ENCODE measurements at regions of chr7 and their contacts with region 1.

Region 1: GRCh38 chr7:130047821-130048220 is 3.4 kb downstream of the ZC3HC1 start:
- DNase-seq: no peak
- H3K4me3 ChIP-seq: no peak overlapping the region
- H3K27ac ChIP-seq: no peak overlapping the region
- H3K4me1 ChIP-seq: peaks cover 8% of the 10 kb centered on the region
- H3K27me3 ChIP-seq: no peaks in the 10 kb centered on the region
- CTCF ChIP-seq: no peak

Region 2: DNA sequence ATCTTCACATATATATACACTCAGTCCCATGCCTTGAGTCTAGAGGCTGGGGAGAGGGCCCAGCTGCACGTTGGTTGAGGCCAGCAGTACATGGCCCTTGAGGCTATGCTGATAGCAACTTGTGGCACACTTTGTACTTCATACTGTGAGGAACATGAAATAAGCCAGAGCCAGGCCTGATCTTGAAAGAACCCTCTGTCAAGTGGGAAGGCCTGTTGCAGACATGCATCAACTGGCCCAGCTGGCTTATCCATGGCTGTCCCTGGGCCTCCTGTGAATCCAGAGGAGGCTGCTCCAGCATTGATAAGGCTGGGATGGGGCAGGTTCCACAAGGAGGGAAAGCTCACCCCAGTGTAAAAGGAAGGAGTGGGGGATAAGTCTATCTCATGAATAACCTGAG is 295.9 kb before region 1 on chr7:
- CTCF ChIA-PET with region 1: no interaction called
- POLR2A ChIA-PET with region 1: interaction called, 13 read pairs
- intact Hi-C with region 1: no loop called
- DNase-seq: no peak
- H3K4me3 ChIP-seq: no peak overlapping the region
- H3K27ac ChIP-seq: no peak overlapping the region
- H3K4me1 ChIP-seq: no peaks in the 10 kb centered on the region
- H3K27me3 ChIP-seq: no peaks in the 10 kb centered on the region
- CTCF ChIP-seq: no peak

Region 3: DNA sequence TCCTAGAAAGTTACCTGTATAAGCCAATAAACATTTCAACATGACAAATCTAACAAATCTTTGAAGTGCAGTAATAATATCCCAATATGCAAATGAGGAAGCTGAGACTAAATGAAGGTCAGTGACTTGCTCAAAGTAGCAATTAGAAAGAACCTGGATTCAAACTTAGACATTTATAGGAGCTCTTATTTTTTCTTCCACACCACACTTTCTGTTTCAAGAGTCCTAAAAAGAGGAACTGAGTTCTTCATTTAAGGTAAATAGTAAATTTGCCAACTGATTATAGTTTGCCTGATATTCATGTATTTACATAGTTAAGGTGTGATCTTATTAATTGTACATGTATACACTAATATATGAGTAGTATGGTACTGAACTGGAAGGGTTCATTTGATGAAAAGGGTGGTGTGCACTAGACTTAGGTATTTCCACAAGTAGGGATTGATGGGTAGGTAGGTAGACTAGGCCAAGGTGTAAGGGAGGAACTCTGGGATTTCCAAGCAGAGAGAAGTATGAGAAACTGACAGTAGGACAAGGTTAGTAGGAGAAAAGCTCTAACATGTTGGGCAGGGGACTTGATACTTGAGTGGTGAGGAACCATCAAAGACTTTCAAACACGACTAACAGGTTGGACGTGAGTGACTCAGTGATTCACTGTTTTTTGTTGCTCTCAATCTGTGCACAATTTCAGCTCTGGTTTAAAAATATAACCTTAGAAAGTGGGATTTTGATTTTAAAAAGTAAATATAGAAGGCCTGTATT is 66.7 kb after region 1 on chr7:
- CTCF ChIA-PET with region 1: no interaction called
- POLR2A ChIA-PET with region 1: no interaction called
- intact Hi-C with region 1: no loop called
- DNase-seq: peak; percentile 26 to 77
- H3K4me3 ChIP-seq: no peak overlapping the region
- H3K27ac ChIP-seq: peak overlapping the region; percentile 40
- H3K4me1 ChIP-seq: peaks cover 22% of the 10 kb centered on the region
- H3K27me3 ChIP-seq: no peaks in the 10 kb centered on the region
- CTCF ChIP-seq: no peak

Region 4: GRCh38 chr7:130430841-130431666 is 383.2 kb after region 1 on chr7:
- CTCF ChIA-PET with region 1: no interaction called
- POLR2A ChIA-PET with region 1: no interaction called
- intact Hi-C with region 1: no loop called
- DNase-seq: no peak
- H3K4me3 ChIP-seq: no peak overlapping the region
- H3K27ac ChIP-seq: no peak overlapping the region
- H3K4me1 ChIP-seq: peaks cover 13% of the 10 kb centered on the region
- H3K27me3 ChIP-seq: no peaks in the 10 kb centered on the region
- CTCF ChIP-seq: no peak